ENCODE measurements at regions of chr6 and their contacts with region 1.

Region 1: DNA sequence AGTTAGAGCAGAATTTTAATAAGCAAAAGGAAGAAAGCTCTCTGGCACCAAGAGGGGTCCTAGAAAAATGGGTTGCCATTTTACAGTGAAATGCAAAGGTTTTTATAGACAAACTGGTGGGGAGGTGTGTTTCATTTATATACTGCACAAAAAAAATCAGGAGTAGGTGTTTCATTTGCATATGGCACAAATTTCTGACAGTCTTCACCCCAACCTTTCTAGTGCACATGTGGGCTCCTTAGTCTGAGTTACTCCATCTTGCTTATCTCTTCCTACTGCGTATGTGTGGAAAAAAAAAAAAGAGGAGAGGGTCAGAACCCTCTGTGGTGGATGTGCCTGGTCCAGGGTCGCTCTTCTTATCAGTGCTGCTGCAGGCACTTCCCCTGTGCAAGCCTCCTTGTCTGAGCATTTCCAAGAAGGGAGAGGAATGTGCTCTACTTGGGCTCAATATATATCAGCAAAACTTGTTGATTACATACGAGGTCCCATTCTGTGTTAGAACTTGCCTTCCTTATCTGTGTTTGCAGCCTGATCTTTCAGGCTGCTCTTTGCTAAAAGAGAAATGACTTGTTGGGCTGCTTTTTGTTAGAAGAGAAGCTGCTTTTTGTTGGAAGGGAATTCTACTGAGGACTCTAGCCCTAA is 59.0 kb upstream of the MRAP2 start:
- DNase-seq: no peak
- H3K4me3 ChIP-seq: no peak overlapping the region
- H3K27ac ChIP-seq: no peak overlapping the region
- H3K4me1 ChIP-seq: no peaks in the 10 kb centered on the region
- H3K27me3 ChIP-seq: no peaks in the 10 kb centered on the region
- CTCF ChIP-seq: no peak

Region 2: DNA sequence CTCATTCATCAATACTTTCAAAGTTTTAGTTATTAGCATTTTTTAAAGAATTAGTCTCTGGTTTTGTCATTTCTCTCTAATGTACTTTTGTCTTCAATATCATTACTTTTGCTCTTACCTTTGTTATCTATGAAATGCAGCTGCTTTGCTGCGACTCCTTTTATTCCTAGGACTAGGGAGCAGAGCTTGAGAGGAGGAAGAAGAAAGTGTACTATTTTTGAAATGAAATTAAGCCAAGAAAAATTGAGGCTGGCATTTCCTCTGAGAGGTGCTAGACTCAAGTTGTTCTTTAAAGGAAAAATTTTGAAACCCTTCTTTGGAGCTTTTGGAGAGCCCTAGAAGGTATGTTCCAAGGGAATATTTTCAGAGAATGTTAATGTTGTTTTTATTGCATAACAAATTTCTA is 10.8 kb after region 1 on chr6:
- CTCF ChIA-PET with region 1: no interaction called
- POLR2A ChIA-PET with region 1: interaction called, 11 read pairs
- intact Hi-C with region 1: no loop called
- DNase-seq: no peak
- H3K4me3 ChIP-seq: no peak overlapping the region
- H3K27ac ChIP-seq: no peak overlapping the region
- H3K4me1 ChIP-seq: no peaks in the 10 kb centered on the region
- H3K27me3 ChIP-seq: no peaks in the 10 kb centered on the region
- CTCF ChIP-seq: no peak

Measured in PC-9 (cell line).